ENCODE measurements at regions of chr6 and their contacts with region 1.

Region 1: DNA sequence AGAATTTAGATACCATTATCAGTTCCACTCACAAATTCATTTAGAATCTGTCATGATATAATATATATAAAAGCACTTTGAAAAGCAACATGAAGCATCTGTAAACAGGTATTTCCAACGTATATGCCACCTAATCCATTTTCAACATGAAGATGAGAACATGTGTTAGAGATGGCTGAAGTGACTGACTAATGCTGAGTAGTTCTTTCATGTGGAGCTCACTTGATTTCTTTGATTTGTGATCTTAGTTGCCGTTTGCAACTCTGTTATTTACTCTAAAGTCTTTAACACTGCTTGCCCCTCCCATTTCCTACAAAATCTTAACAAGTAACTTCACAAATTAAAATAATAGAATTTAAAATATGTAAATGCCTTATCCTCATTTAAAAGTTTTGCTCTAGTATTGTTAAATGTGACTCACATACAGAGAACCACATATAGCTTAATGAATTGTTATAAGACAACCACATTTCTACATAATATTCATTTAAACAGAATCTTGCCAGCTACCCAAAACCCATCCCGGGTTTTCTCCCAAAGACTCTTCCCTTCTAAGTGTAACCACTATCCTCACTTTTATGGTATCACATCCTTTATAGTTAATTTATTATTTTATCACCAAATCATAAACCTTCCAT is 78.3 kb downstream of the ME1 start:
- DNase-seq: no peak
- H3K4me3 ChIP-seq: no peak overlapping the region
- H3K27ac ChIP-seq: no peak overlapping the region
- H3K4me1 ChIP-seq: no peaks in the 10 kb centered on the region
- H3K27me3 ChIP-seq: no peaks in the 10 kb centered on the region
- CTCF ChIP-seq: no peak

Region 2: DNA sequence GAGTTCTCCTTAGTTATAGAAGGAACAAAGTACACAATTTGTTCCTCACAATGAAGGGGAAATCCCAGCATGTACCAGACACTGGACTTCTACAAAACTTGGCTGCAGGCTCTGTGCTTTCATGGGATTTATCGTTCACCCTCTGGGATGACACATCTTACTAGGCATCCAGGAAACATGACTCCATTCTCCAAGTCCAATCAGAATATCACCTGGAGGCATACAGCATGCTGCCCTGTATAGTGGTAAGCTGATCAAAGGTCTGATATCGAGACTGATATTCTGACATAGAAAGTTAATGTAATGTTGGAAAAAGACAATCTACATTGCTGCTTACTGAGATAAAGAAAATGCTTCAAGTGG is 152.7 kb before region 1 on chr6:
- CTCF ChIA-PET with region 1: no interaction called
- POLR2A ChIA-PET with region 1: interaction called, 15 read pairs
- intact Hi-C with region 1: no loop called
- DNase-seq: peak; percentile 24 to 58
- H3K4me3 ChIP-seq: no peak overlapping the region
- H3K27ac ChIP-seq: no peak overlapping the region
- H3K4me1 ChIP-seq: no peaks in the 10 kb centered on the region
- H3K27me3 ChIP-seq: no peaks in the 10 kb centered on the region
- CTCF ChIP-seq: no peak

Region 3: GRCh38 chr6:83309344-83309743 is 43.2 kb before region 1 on chr6:
- CTCF ChIA-PET with region 1: no interaction called
- POLR2A ChIA-PET with region 1: no interaction called
- intact Hi-C with region 1: loop called (anchors 10 kb)
- DNase-seq: no peak
- H3K4me3 ChIP-seq: no peak overlapping the region
- H3K27ac ChIP-seq: no peak overlapping the region
- H3K4me1 ChIP-seq: no peaks in the 10 kb centered on the region
- H3K27me3 ChIP-seq: no peaks in the 10 kb centered on the region
- CTCF ChIP-seq: no peak

Region 4: GRCh38 chr6:85163156-85164080 is 1810.9 kb after region 1 on chr6:
- CTCF ChIA-PET with region 1: no interaction called
- POLR2A ChIA-PET with region 1: no interaction called
- intact Hi-C with region 1: no loop called
- DNase-seq: no peak
- H3K4me3 ChIP-seq: no peak overlapping the region
- H3K27ac ChIP-seq: no peak overlapping the region
- H3K4me1 ChIP-seq: no peaks in the 10 kb centered on the region
- H3K27me3 ChIP-seq: no peaks in the 10 kb centered on the region
- CTCF ChIP-seq: no peak